ENCODE measurements at regions of chr10 and their contacts with region 1.

Region 1: DNA sequence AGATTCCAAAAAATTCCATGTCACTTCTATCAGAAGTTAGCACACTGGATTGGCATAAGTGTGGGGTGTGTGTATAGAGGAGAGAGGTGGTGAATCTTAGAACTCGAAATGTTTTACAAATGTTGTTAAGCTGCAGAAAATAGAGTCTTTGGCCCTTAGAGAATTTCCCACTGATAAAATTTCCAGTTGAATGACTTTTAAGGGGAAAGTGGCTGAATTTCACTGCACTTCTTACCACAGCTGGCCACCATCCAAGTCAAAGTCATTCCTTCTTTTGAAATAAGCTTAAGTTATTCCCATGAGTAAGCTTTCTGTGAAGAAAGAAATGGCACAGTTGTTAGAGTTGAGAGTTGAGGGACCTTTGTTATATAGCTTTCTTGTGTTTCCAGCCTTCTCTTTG is 13.9 kb downstream of the VCL start:
- DNase-seq: peak; percentile 92
- H3K4me3 ChIP-seq: no peak overlapping the region
- CTCF ChIP-seq: no peak

Region 2: DNA sequence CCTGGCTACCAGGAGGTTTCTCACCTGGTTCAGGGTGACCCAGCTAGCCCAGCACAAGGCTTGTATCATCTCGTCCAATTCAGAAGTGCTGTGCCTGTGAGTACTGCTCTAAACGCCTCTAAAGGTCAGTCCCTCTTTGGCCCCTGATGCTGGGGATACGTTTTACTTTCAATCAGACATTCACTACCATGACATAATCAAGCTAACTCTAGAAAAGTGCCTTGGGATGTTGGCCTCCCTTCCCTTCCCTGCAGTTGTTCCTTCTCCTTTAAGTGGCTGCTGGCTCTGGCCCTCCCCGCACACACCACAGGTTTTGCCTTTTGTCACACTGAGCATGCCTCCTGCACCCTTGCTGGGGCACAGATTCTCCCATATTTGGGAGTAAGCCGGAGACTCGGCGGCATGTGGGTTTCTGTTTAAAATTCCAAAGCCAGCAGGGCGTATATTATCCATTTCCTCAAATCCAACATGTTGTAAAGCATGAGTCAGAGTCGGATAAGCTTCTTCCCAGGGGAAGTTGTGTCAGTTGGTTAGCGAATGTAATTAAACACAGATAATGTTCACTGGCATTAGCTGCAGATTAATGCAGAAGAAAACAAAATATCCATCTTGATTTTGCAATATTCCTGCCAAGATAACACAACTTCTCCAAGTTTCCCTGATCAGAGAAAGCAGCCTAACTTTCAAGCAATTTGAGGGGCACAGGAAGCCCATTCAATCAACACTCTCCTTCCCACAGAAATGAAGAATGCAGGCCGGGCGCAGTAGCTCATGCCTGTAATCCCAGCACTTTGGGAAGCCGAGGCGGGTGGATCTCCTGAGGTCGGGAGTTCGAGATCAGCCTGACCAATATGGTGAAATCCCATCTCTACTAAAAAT is 45.6 kb before region 1 on chr10:
- in situ Hi-C with region 1: loop called (anchors 10 kb)
- DNase-seq: peak; percentile 99
- H3K4me3 ChIP-seq: no peak overlapping the region
- CTCF ChIP-seq: no peak